ENCODE measurements at regions of chr17 and their contacts with region 1.

Region 1: DNA sequence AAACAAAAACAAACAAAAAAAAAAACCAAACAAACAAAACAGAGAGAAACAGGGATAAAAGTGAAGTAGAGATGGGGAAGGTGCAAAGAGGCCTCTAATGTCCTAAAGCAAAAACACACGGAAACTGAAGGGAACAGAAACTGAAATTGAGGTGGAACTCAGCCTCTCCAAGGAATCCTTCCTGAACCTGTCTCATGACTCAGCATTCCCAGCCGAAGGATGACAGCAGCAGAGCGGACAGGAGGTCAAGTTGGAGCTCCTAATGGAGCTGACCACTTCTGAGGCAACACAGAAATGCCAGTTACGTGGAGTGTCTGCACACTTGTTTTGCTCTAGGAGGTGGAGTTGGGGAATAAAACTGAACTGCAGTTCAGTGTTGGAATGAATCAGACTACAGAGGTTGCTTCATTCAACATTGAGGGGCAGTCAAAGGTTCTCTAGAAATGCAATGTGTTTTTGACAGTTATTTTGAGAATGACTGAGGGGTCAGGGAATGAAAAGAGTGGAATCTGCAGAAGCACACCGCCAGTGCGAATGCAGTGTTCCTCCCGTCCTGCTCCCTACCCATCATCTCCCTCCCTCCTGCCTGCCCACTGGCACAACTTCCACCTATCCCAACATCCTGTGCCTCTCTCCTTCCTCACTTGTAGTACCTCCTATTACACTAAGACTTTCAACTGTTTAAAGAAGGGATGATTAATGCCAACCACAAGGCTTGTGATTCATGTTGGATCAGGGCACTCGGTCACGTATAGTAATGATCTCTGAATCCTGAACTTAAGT is 6.3 kb downstream of the UBE2O start:
- DNase-seq: peak in 2 of 5 donors; percentile 32 to 34
- H3K4me3 ChIP-seq: no peak overlapping the region
- H3K27ac ChIP-seq: no peak overlapping the region
- H3K4me1 ChIP-seq: peaks cover 4% of the 10 kb centered on the region
- H3K27me3 ChIP-seq: no peaks in the 10 kb centered on the region
- CTCF ChIP-seq: no peak
- EP300 ChIP-seq: no peak
- POLR2A ChIP-seq: no peak

Region 2: GRCh38 chr17:76278952-76279741 is 167.5 kb before region 1 on chr17:
- intact Hi-C with region 1: no loop called
- DNase-seq: peak; percentile 82 to 94 (median 91)
- H3K4me3 ChIP-seq: no peak overlapping the region
- H3K27ac ChIP-seq: no peak overlapping the region
- H3K4me1 ChIP-seq: peaks cover 1% of the 10 kb centered on the region
- H3K27me3 ChIP-seq: no peaks in the 10 kb centered on the region
- CTCF ChIP-seq: peak; percentile 85 to 96 (median 90)
- EP300 ChIP-seq: no peak
- POLR2A ChIP-seq: no peak

Region 3: DNA sequence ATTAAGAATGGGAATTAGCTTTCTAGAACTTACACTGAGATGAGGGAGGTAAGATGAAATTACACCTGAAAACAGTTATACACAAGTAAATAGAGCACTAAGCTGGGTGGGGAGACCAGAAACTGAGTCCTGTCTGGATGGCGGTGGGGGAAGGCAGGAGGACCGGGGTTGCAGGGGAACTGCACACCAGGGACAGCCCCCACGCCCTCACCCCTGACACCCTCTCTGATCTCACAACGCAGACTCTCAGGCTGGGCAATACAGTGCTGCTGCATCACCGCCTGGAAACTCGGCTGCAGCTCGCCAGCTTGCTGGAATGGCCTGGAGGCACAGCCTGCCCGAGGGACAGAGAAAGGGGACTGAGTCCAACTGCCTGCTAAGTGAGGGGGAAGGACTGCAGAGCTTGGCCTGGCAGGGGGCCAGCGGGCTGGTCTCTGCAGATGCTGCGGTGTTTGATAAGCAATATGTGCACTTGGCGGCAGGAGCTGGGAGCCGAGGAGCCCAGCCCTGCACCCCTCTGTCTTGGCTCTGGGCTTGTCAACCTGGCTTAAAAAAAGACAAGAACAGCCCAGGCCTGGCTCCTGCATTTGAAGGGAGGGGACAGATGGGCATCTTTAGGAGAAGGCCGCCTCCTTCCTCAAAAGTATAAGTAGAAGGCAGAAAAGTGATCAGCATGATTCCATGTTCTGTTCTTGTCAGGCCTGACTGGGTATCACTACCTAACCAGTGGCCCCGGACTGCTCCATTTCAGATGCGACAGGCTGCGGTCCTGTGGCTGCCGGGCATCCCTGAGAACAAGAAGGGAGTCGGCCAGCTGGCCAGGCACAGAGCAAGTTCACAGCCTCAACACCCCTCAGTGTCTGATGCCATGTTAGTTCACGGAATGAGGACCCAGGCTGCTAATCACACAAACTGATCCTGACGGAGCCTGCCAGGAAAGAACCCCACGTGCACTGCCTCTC is 32.0 kb before region 1 on chr17:
- intact Hi-C with region 1: loop called in 2 of 4 experiments (anchors 5 to 10 kb)
- DNase-seq: peak; percentile 73 to 85 (median 81)
- H3K4me3 ChIP-seq: no peak overlapping the region
- H3K27ac ChIP-seq: no peak overlapping the region
- H3K4me1 ChIP-seq: peaks cover 15% of the 10 kb centered on the region
- H3K27me3 ChIP-seq: no peaks in the 10 kb centered on the region
- CTCF ChIP-seq: no peak
- EP300 ChIP-seq: no peak
- POLR2A ChIP-seq: no peak

Measured in ovary (tissue), 10 donors.